ENCODE measurements at regions of chr4 and their contacts with region 1.

Region 1: DNA sequence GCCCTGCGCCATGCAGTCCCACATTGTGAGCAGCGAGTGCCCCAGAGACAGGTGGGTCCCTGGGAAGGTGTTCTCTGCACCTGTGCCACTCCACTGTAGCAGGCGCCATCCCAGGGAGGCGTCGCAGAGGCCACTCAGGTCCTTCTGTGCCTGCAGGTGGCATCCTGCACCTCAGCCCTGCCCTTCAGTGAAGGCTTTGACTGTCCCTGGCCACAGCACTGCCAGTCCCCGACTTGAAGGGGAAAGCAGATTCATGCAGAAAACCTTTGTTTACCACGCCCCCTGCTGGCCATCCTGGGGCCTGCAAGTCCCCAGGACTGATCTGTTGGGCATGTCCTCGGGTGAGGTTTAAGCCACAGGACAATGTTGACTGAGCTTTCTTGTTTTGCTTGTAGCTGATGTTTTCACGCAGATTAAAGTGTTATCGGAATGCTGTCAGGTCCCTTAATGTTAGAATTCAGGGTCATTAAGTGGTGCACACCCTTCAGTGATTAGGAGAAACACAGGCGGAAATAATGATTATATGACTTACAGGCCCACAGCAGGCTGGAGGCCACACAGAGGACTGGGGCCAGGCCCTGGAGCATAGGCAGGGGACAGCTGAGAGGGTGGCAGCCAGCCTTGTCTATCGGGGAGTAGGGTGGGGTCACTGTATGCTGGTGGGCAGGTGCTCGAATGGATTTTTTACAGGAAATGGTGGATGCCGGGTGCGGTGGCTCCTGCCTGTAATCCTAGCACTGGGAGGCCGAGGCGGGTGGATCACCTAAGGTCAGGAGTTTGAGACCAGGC is 5.0 kb downstream of the TACC3 start:
- DNase-seq: peak; percentile 91 to 97 (median 94)
- ATAC-seq: peak; percentile 68
- H3K4me3 ChIP-seq: no peak overlapping the region
- H3K27ac ChIP-seq: peak overlapping the region in 3 of 4 donors; percentile 14 to 73 (median 67)
- H3K4me1 ChIP-seq: peaks cover 43% of the 10 kb centered on the region
- H3K27me3 ChIP-seq: no peaks in the 10 kb centered on the region
- CTCF ChIP-seq: peak; percentile 91 to 99 (median 95)
- POLR2A ChIP-seq: no peak

Region 2: DNA sequence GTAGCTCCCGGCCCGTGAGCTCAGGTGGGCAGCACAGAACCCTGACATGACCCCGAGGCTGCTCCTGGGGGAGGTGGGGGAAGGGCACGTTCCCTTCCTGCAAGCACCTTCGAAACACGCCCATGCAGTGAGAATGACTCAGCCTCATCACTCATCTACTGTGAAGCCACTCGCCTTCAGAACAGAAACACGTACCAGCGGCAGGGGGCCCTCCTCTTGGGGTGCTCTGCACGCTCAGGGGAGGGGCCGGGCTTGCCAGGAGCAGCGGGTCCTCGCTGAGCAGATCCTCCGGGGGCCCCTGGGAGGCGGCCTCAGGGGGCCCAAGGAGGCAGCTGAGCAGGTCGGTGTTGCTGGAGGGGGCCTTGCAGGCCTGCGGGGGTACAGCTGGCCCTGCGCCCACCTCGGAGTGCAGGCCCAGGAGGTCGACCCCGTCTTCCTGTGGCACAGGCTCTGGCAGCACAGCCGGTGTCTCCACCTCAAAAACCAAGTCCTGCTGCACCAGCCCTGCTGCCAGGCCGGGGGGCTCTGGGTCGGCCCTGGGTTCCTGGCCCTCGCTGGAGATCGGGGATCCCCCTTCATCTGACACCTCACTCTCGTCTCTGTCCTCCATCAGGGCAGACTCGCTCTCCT is 859.5 kb before region 1 on chr4:
- intact Hi-C with region 1: no loop called
- DNase-seq: no peak
- ATAC-seq: no peak
- H3K4me3 ChIP-seq: no peak overlapping the region
- H3K27ac ChIP-seq: no peak overlapping the region
- H3K4me1 ChIP-seq: no peaks in the 10 kb centered on the region
- H3K27me3 ChIP-seq: no peaks in the 10 kb centered on the region
- CTCF ChIP-seq: no peak
- POLR2A ChIP-seq: no peak

Region 3: GRCh38 chr4:1583051-1583785 is 143.1 kb before region 1 on chr4:
- intact Hi-C with region 1: no loop called
- DNase-seq: no peak
- ATAC-seq: no peak
- H3K4me3 ChIP-seq: no peak overlapping the region
- H3K27ac ChIP-seq: no peak overlapping the region
- H3K4me1 ChIP-seq: peaks cover 17% of the 10 kb centered on the region
- H3K27me3 ChIP-seq: peaks cover 0 to 3% of the 10 kb centered on the region in 2 donors
- CTCF ChIP-seq: no peak
- POLR2A ChIP-seq: no peak

Region 4: DNA sequence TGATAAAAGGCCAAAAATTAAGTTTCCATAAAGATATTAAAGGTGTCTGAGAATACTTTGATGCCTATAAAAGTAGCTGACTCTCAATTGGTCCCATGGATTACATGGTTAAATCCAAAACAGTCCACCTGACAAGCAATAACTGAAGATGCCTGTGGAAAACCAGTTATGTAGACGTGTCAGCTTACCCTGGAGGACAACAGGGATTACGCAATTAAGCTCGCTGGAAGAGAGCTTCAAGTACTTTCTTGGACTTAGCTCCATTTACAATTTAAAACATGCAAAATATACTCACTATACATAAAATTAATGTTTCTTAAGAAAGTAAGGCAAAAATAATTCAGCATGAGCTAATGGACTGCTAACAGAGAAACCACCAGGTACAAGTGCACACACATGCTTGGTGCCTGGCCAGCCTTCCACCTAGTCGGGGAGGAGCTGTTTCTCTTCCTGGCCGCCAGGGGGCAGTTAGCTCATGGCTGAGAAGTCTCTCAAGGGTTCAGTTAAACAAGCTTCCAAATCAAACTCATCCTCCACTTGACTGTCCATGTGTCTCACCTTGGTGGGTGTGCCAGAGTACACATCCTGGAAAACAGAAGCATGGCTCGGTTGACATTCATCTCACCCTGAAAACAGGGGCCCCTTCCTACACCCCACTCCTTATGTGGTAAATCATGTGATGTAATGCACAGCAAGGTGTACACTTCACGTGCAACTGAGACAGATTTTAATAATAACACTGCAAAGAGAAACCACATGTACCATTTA is 33.0 kb before region 1 on chr4:
- intact Hi-C with region 1: loop called (anchors 5 kb)
- DNase-seq: peak; percentile 77 to 84 (median 80)
- ATAC-seq: peak; percentile 95
- H3K4me3 ChIP-seq: no peak overlapping the region
- H3K27ac ChIP-seq: no peak overlapping the region
- H3K4me1 ChIP-seq: peaks cover 4% of the 10 kb centered on the region
- H3K27me3 ChIP-seq: no peaks in the 10 kb centered on the region
- CTCF ChIP-seq: peak; percentile 81 to 93 (median 86)
- POLR2A ChIP-seq: no peak

Region 5: GRCh38 chr4:1928356-1929239 is 202.3 kb after region 1 on chr4:
- intact Hi-C with region 1: no loop called
- DNase-seq: no peak
- ATAC-seq: no peak
- H3K4me3 ChIP-seq: no peak overlapping the region
- H3K27ac ChIP-seq: no peak overlapping the region
- H3K4me1 ChIP-seq: peaks cover 10% of the 10 kb centered on the region
- H3K27me3 ChIP-seq: no peaks in the 10 kb centered on the region
- CTCF ChIP-seq: no peak
- POLR2A ChIP-seq: no peak

Region 6: DNA sequence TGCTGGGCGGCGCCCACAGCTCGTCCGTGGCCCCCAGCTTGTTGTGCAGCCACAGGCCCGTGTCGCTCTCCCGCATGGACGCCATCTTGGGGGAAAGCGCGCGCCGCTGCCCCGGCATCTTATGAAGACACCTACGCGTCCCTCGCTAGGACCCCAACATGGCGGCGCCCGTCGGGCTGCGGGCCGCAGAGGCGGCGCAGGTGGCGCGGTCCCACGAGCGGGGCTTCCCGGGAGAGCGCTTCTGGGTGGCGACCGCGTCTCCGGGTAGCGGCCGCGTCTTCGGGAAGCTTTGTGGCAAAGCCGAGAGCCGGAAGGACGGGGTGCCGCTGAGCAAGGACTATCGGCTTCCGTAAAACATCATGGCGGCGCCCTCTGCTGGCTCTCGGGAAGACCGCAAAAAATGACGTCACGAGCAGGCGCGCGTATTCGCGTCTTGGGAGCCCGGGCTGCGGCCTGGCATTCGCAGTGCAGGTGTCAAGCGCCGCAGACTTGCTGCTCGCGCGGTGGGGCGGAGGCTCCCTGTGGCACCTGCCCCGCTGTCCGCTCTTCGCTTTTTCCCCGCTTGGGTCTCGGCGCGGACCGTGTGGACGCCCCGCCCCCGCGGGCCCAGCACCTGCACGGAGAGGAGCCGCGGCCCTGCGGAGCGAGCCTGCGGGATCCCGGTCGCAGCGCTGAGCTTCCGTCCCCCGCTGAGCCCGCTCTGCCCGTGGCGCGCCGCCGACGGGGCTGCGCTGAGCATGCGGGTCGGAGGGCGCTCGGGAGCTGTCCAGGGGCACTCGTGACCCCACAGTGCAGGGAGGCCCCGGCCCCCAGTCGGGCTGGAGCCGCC is 282.7 kb after region 1 on chr4 and contains the start of gene NELFA:
- intact Hi-C with region 1: no loop called
- DNase-seq: peak; percentile 96 to 98 (median 97)
- ATAC-seq: peak; percentile 89
- H3K4me3 ChIP-seq: peak within 1 kb of the TSS; percentile 67 to 77
- H3K27ac ChIP-seq: peak within 1 kb of the TSS; percentile 94 to 99 (median 98)
- H3K4me1 ChIP-seq: peaks cover 21% of the 10 kb centered on the region
- H3K27me3 ChIP-seq: no peaks in the 10 kb centered on the region
- CTCF ChIP-seq: peak in 6 of 7 experiments; percentile 18 to 83 (median 52)
- POLR2A ChIP-seq: peak; percentile 85 to 92 (median 91)
- total RNA-seq, gene NELFA: 19.7 to 74.5 TPM

Measured in body of pancreas (tissue), 4 donors.